ENCODE measurements at regions of chr18 and their contacts with region 1.

Region 1: GRCh38 chr18:13447626-13448334 is 229.2 kb downstream of the LDLRAD4 start:
- DNase-seq: no peak
- H3K4me3 ChIP-seq: no peak overlapping the region
- H3K27ac ChIP-seq: no peak overlapping the region
- H3K4me1 ChIP-seq: no peaks in the 10 kb centered on the region
- H3K27me3 ChIP-seq: no peaks in the 10 kb centered on the region
- CTCF ChIP-seq: no peak
- POLR2A ChIP-seq: no peak

Region 2: DNA sequence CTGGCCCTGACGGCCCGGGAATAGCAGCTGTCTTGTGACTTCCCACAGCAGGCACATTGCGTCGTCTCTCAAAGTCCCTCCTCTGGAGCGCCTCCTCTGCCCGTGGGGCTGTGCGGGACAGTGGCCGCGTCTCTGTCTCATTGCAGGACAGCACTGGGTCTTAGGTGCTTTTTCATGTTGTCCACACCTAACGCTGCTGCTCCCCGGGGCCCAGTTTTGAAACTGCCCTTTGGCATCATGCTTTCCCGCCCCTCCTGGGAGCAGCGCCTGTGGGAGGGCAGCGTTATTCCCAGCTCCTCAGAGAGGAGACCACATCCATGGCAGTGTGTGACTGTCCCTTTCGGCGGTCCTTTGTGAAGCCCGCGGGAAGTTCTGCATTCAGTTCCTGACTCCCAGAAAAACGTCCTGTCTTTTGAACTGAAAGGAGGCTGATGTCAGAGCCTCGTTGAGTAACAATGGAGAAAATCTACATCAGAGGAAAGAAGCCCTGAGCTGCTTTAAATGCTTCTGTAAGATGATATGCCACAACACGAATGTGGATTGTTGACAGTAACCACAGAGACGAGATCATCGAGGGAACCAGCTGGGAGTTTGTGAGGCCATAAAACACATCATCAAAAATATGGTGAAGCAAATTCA is 52.6 kb after region 1 on chr18:
- intact Hi-C with region 1: loop called (anchors 10 kb)
- DNase-seq: peak; percentile 49
- H3K4me3 ChIP-seq: no peak overlapping the region
- H3K27ac ChIP-seq: peak overlapping the region in 1 of 2 donors; percentile 47
- H3K4me1 ChIP-seq: peaks cover 2% of the 10 kb centered on the region
- H3K27me3 ChIP-seq: no peaks in the 10 kb centered on the region
- CTCF ChIP-seq: no peak
- POLR2A ChIP-seq: no peak

Region 3: GRCh38 chr18:13629841-13630715 is 182.3 kb after region 1 on chr18:
- intact Hi-C with region 1: loop called (anchors 10 kb)
- DNase-seq: peak; percentile 37
- H3K4me3 ChIP-seq: no peak overlapping the region
- H3K27ac ChIP-seq: no peak overlapping the region
- H3K4me1 ChIP-seq: no peaks in the 10 kb centered on the region
- H3K27me3 ChIP-seq: no peaks in the 10 kb centered on the region
- CTCF ChIP-seq: peak; percentile 16 to 83 (median 72)
- POLR2A ChIP-seq: no peak